Head of caudate nucleus (tissue), 42 donors: ENCODE measurements at regions of chr19 and their contacts with region 1.

Region 1: DNA sequence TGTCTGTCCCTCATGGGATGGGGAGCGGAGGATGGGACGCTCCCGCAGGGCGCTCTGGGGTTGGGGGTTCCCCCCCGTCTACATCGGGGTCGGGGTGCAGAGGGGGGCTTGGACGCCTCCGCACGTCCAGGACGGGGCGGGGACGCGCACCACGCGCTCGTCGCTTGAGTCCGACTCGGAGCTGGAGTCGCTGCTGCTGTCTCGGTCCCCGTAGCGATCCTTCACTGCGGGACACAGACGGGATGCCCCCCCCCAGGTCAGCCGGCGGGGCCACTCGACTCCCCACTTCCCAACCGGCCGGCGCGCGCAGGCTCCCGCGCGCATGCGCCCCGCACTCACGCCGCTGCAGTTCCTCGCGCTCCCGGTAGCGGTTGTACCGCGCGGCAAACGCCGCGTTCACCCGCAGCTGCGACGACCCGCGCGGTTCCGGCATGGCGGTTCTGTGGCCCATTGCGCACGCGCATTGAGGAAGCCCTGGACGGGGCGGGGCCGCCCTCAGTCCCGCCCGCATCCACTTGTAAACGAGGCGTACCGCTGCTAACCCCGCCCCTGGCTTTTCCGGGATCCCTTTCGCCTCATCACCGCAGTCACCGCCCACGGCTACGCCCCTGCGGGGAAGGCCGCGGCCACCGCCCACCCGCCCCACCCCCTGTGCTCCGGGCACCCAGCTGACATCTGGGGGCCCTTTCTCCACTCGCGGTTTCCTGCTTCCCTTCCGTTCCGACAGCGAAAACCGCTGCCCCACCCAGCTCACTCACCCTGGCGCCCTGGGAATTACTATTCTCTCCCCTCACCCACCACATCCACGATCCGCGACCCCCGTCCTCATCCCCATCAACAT is at the start of gene KRI1:
- DNase-seq: peak; percentile 94 to 99 (median 98)

Region 2: DNA sequence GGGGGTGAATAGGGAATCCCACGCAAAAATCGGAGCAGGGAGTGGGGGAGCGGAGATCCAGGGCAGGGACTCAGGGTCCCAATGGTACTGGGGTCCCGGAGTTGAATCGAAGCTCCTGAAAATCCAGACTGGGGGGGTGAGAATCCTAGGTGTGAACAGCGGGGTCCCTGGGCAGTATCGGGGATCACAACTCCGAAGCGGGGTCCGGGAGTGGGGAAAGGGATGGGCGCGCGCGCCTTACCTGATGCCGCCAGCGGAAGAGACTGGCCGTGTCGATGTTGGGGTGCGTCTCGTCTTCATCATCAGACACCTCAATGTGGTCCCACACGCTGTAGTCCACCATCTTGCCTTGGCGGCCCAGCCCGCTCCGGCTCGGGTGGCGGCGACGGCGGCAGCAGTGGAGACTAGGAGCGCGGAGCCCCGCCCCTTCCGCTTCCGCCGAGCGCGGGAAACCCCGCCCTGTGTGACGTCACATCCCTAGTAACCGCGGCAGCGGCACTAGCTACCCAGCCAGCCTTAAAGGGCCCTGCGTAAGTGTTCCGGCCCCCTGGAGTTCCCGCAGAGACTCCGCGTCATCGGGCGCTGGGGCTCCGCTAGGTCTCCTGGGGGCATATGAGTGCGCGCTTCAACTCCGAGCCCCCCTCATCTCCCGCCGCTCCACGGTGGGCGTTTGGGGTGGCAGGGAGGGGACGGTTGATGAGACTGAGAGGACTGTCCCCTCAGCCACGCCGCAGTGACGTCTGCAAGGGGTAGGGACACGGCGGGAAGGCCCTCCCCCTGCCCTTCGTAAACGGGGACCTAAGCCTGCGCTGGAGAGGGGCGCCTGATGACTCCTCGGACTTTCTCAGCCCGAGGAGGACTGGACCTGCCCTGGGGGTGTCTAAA is 162.4 kb before region 1 on chr19 and contains the start of gene CDC37:
- intact Hi-C with region 1: loop called (anchors 10 kb)
- DNase-seq: peak; percentile 95 to 100 (median 98)

Region 3: GRCh38 chr19:10502524-10503001 is 63.2 kb before region 1 on chr19:
- intact Hi-C with region 1: loop called (anchors 5 kb)
- DNase-seq: peak; percentile 81 to 97 (median 93)

Region 4: DNA sequence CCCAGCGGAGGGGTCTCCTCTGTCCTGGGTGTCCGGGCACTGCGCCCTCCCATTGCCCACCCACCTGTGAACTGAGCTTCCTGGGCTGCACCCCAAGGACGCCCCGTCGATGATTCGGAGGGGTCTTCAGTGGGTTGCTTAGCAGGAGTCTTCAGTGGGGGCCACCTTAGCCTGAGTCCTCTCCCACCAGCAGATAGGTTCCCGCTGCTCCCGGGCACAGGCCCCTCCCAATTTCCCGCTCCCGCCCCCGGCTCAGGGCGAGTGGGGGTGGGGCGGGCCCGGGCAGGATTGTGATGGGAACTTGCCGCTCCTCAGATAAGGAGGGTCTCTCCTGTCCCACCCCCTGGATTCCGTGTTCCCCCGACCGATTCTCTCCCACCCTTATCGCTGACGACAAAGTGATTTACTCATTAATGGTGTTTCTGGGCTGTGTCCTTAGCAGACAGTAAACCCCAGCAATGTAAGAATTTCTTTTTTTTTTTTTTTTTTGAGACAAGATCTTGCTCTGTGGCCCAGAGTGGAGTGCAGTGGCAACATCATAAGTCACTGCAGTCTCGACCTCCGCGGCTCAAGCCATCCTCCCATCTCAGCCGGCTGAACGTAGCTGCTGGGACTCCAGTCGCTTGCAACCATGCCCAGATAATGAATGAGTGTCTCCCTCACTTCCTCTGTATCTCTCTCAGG is 47.9 kb before region 1 on chr19:
- intact Hi-C with region 1: no loop called
- DNase-seq: peak in 41 of 42 donors; percentile 31 to 85 (median 64)